Tibial artery (tissue), 4 donors: ENCODE measurements at regions of chr3 and their contacts with region 1.

Region 1: GRCh38 chr3:136044980-136045745 is 79.6 kb downstream of the PPP2R3A start:
- DNase-seq: no peak
- H3K4me3 ChIP-seq: no peak overlapping the region
- H3K27ac ChIP-seq: no peak overlapping the region
- H3K4me1 ChIP-seq: no peaks in the 10 kb centered on the region
- H3K27me3 ChIP-seq: no peaks in the 10 kb centered on the region
- CTCF ChIP-seq: no peak

Region 2: GRCh38 chr3:134846911-134847317 is 1198.2 kb before region 1 on chr3:
- intact Hi-C with region 1: no loop called
- DNase-seq: no peak
- H3K4me3 ChIP-seq: no peak overlapping the region
- H3K27ac ChIP-seq: no peak overlapping the region
- H3K4me1 ChIP-seq: peaks cover 0 to 6% (median 0%) of the 10 kb centered on the region in 4 donors
- H3K27me3 ChIP-seq: no peaks in the 10 kb centered on the region
- CTCF ChIP-seq: no peak

Region 3: GRCh38 chr3:135922903-135923250 is 122.3 kb before region 1 on chr3:
- intact Hi-C with region 1: loop called (anchors 5 kb)
- DNase-seq: no peak
- H3K4me3 ChIP-seq: no peak overlapping the region
- H3K27ac ChIP-seq: no peak overlapping the region
- H3K4me1 ChIP-seq: no peaks in the 10 kb centered on the region
- H3K27me3 ChIP-seq: no peaks in the 10 kb centered on the region
- CTCF ChIP-seq: no peak

Region 4: DNA sequence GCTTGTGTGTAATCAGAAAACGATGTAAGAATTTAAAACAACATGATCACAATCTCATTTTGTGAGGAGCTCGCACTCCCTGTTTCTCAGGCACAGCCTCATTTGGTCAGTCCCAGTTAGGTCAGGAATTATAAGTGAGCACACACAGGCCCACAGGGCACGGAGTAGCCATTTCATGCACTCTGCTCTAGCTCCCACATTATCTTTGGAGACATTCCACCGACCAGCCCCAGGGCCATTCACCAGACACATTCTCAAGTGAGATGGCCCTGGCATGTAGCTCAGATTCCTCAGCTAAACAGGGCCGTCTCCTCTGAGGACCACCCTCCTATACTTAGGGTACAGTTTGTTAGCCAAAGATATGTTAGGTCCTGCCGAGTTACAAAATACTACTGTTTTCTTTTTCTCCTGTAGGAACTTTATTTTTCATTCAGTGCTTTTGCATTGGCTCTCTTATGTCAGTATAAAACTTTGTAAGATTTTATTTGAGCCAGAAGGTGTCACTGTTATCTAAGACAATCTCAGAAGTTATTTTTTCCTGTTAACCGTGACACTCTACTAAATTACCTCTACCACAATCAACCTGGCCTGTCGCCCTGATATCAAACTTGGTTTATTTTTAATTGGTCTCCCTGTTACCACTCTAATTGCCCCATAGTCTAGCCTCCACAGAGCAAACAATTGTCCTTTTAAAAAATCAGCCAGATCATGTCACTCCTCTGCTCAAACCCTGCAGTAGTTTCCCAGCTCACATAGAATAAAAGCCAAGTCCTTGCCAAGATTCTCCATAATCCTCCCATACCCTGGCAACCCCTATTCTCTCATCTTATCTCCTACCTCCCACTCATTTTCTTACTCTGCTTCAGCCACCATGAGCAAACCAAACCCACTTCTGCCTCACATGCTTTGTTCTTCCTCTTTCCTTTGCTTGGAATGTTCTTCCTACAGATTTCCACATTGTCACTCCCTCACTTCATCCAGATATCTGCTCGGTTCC is 26.1 kb after region 1 on chr3:
- intact Hi-C with region 1: no loop called
- DNase-seq: peak in 1 of 2 donors; percentile 30
- H3K4me3 ChIP-seq: no peak overlapping the region
- H3K27ac ChIP-seq: peak overlapping the region; percentile 61 to 78
- H3K4me1 ChIP-seq: peaks cover 0 to 27% (median 15%) of the 10 kb centered on the region in 4 donors
- H3K27me3 ChIP-seq: no peaks in the 10 kb centered on the region
- CTCF ChIP-seq: peak in 1 of 2 experiments; percentile 16